ENCODE measurements at regions of chr3 and their contacts with region 1.

Region 1: GRCh38 chr3:174862143-174862542 is 3.0 kb downstream of the NAALADL2 start:
- DNase-seq: peak; percentile 80
- H3K4me3 Mint-ChIP-seq: peak overlapping the region; percentile 83
- H3K27ac Mint-ChIP-seq: peak overlapping the region; percentile 71
- H3K4me1 Mint-ChIP-seq: peaks cover 53% of the 10 kb centered on the region
- H3K27me3 Mint-ChIP-seq: no peaks in the 10 kb centered on the region
- CTCF ChIP-seq: peak; percentile 81

Region 2: GRCh38 chr3:174440741-174441587 is 421.2 kb before region 1 on chr3:
- CTCF ChIA-PET with region 1: no interaction called
- intact Hi-C with region 1: loop called (anchors 2 kb)
- DNase-seq: peak; percentile 94
- H3K4me3 Mint-ChIP-seq: peak overlapping the region; percentile 80
- H3K27ac Mint-ChIP-seq: peak overlapping the region; percentile 62
- H3K4me1 Mint-ChIP-seq: peaks cover 20% of the 10 kb centered on the region
- H3K27me3 Mint-ChIP-seq: no peaks in the 10 kb centered on the region
- CTCF ChIP-seq: peak; percentile 18

Region 3: GRCh38 chr3:174640932-174641331 is 221.2 kb before region 1 on chr3:
- CTCF ChIA-PET with region 1: no interaction called
- intact Hi-C with region 1: no loop called
- DNase-seq: no peak
- H3K4me3 Mint-ChIP-seq: no peak overlapping the region
- H3K27ac Mint-ChIP-seq: no peak overlapping the region
- H3K4me1 Mint-ChIP-seq: no peaks in the 10 kb centered on the region
- H3K27me3 Mint-ChIP-seq: no peaks in the 10 kb centered on the region
- CTCF ChIP-seq: no peak

Region 4: DNA sequence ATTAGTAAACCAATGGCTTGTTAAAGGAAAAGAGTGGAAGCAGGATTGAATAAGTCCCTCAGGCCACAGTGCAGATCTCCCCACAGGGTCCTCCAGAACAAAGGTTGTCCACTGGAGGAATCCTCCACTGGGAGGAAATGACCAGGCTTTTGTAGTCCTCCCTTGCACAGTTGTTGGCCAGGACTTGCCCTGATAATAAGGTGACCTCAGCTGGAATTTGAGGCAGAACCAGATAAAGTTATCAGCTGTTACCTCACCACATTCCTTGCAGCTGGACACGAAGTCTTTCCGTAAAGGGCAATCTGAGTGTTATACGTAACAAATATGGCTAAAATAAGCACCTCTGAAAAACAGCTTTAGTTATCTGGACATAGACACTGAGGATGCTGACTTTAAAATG is 86.6 kb before region 1 on chr3:
- CTCF ChIA-PET with region 1: interaction called, 13 read pairs
- intact Hi-C with region 1: loop called (anchors 2 kb)
- DNase-seq: peak; percentile 26
- H3K4me3 Mint-ChIP-seq: no peak overlapping the region
- H3K27ac Mint-ChIP-seq: no peak overlapping the region
- H3K4me1 Mint-ChIP-seq: peaks cover 21% of the 10 kb centered on the region
- H3K27me3 Mint-ChIP-seq: no peaks in the 10 kb centered on the region
- CTCF ChIP-seq: no peak

Region 5: GRCh38 chr3:175002732-175003143 is 140.6 kb after region 1 on chr3:
- CTCF ChIA-PET with region 1: no interaction called
- intact Hi-C with region 1: no loop called
- DNase-seq: no peak
- H3K4me3 Mint-ChIP-seq: no peak overlapping the region
- H3K27ac Mint-ChIP-seq: no peak overlapping the region
- H3K4me1 Mint-ChIP-seq: no peaks in the 10 kb centered on the region
- H3K27me3 Mint-ChIP-seq: no peaks in the 10 kb centered on the region
- CTCF ChIP-seq: no peak

Region 6: DNA sequence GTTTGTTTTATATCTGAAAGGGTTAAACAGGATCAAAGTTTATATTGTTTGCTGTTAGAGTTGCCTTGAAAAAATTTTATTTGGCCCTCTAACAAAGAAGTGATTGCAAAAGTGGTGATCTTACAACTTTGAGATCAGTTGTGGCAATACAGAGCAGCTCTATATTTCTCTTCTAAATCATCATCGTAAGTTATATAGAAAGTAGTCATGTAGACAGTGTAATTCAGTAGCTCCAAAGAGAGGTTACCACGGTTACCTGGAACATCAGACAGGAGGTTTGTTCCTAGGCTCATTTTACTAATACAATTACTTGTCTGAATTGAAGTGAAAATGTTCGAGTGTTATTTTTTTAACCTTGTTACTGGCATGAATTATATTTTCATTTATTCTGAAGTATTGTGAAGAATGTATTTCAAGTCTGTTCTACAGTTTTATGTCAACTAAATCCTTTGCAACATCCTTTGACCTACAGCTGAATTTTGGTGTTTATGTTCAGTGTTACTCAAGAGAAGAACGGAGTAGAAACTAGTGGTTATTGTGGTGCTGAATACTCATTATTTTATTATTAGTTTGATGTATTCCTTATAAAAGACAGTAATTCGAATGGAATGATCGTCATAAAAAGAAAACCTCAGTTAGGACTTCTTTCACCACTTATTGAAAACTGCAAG is 211.2 kb after region 1 on chr3:
- CTCF ChIA-PET with region 1: interaction called, 5 read pairs
- intact Hi-C with region 1: loop called (anchors 2 kb)
- DNase-seq: no peak
- H3K4me3 Mint-ChIP-seq: no peak overlapping the region
- H3K27ac Mint-ChIP-seq: peak overlapping the region; percentile 47
- H3K4me1 Mint-ChIP-seq: peaks cover 33% of the 10 kb centered on the region
- H3K27me3 Mint-ChIP-seq: no peaks in the 10 kb centered on the region
- CTCF ChIP-seq: no peak

Region 7: DNA sequence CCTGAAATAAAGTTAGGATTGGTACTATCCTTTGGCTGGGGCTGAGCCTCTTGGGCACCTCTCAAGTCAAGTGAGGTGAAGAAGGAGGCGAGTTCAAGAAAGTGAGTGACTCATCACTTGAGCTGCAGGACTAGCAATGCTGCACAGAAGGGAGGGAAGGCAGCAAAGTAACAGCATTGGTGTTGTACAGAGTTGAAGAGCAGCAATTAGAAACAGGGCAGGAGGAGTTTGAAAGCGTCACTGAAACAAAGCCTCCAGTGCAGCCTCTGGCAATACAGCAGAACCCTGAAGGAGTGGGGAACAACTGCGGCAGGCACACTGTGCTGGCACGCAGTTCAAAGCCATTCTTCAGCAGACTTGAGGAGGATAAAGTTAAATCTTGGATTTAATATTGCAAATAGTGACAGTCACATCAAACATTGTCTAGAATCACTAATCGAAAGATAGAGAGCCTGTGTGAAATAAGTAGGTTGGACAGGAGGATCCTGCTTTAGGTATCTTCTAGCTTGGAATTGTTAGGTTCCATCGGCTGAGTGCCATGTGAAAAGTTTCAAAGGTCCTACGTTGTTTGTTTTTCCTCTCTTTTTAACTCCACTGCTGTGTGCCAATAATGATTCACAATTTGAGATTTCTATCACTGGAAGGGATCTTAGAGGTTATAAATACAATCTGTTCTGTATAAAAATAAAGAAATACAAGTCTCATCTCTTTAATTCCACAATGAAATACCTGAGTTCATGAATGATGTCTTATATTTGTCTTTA is 476.8 kb after region 1 on chr3:
- CTCF ChIA-PET with region 1: no interaction called
- intact Hi-C with region 1: loop called (anchors 2 kb)
- DNase-seq: peak; percentile 72
- H3K4me3 Mint-ChIP-seq: peak overlapping the region; percentile 60
- H3K27ac Mint-ChIP-seq: peak overlapping the region; percentile 76
- H3K4me1 Mint-ChIP-seq: peaks cover 40% of the 10 kb centered on the region
- H3K27me3 Mint-ChIP-seq: no peaks in the 10 kb centered on the region
- CTCF ChIP-seq: no peak

Region 8: GRCh38 chr3:175356899-175357324 is 494.8 kb after region 1 on chr3:
- CTCF ChIA-PET with region 1: no interaction called
- intact Hi-C with region 1: no loop called
- DNase-seq: no peak
- H3K4me3 Mint-ChIP-seq: peak overlapping the region; percentile 12
- H3K27ac Mint-ChIP-seq: peak overlapping the region; percentile 57
- H3K4me1 Mint-ChIP-seq: peaks cover 20% of the 10 kb centered on the region
- H3K27me3 Mint-ChIP-seq: no peaks in the 10 kb centered on the region
- CTCF ChIP-seq: no peak

Region 9: GRCh38 chr3:175941356-175941755 is 1079.2 kb after region 1 on chr3:
- CTCF ChIA-PET with region 1: interaction called, 6 read pairs
- intact Hi-C with region 1: loop called (anchors 1 kb)
- DNase-seq: peak; percentile 56
- H3K4me3 Mint-ChIP-seq: no peak overlapping the region
- H3K27ac Mint-ChIP-seq: no peak overlapping the region
- H3K4me1 Mint-ChIP-seq: peaks cover 9% of the 10 kb centered on the region
- H3K27me3 Mint-ChIP-seq: no peaks in the 10 kb centered on the region
- CTCF ChIP-seq: peak; percentile 84

Measured in Calu3 (cell line).